Sigmoid colon (tissue), 7 donors: ENCODE measurements at regions of chr16 and their contacts with region 1.

Region 1: DNA sequence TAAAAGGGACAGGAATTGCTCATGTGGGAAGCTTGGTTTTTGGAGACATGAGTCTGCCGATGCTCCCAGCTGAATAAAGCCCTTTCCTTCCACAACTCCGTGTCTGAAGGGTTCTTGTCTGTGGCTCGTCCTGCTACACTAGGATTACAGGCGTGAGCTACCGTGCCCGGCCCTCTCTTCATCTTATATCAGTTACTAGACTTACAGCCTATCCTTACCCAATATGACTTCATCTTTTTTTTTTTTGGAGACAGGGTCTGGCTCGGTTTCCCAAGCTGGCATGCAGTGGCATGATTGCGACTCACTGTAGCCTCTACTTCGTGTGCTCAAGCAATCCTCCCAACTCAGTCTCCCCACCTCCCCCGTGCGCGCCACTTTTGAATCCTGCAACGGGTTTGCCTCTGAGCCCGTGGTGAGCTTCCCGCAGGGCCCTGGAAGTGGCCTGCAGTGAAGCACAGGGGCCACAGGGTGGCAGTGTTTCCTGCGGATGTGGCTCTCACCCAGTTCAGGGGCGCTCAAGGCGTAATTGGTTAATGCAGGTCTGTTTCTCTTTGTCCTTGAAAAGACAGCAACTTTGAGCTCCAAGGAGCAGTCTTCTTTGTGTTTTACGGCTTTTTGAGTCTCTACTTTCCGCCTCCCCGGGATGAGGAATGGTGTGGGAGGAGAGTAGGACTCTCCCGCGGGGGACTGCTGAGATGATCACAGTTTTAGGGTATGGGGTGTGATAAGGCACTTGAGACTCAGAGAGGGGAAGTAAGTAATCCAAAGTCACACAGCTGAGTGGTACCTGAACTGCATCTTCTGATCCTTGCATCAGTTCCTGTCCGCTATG is 22.7 kb upstream of the GPRC5B start:
- DNase-seq: peak; percentile 77
- H3K4me3 ChIP-seq: no peak overlapping the region
- H3K27ac ChIP-seq: no peak overlapping the region
- H3K4me1 ChIP-seq: peaks cover 0 to 5% (median 0%) of the 10 kb centered on the region in 4 donors
- H3K27me3 ChIP-seq: peaks cover 0 to 12% (median 4%) of the 10 kb centered on the region in 3 donors
- CTCF ChIP-seq: peak; percentile 74 to 91 (median 80)
- EP300 ChIP-seq: no peak
- POLR2A ChIP-seq: no peak

Region 2: GRCh38 chr16:19167710-19168370 is 739.5 kb before region 1 on chr16 and contains the start of gene SYT17:
- intact Hi-C with region 1: no loop called
- DNase-seq: no peak
- H3K4me3 ChIP-seq: peak within 1 kb of the TSS; percentile 26 to 53 (median 46)
- H3K27ac ChIP-seq: peak within 1 kb of the TSS in 1 of 4 donors; percentile 65
- H3K4me1 ChIP-seq: peaks cover 0 to 18% (median 17%) of the 10 kb centered on the region in 4 donors
- H3K27me3 ChIP-seq: peaks cover 18 to 48% (median 29%) of the 10 kb centered on the region in 3 donors
- CTCF ChIP-seq: peak in 2 of 4 experiments; percentile 31 to 43
- EP300 ChIP-seq: no peak
- POLR2A ChIP-seq: no peak
- total RNA-seq, gene SYT17: 0.68 to 2.5 (median 1.8) TPM

Region 3: GRCh38 chr16:19636436-19637270 is 270.7 kb before region 1 on chr16:
- intact Hi-C with region 1: no loop called
- DNase-seq: peak; percentile 67
- H3K4me3 ChIP-seq: no peak overlapping the region
- H3K27ac ChIP-seq: peak overlapping the region; percentile 43 to 60 (median 53)
- H3K4me1 ChIP-seq: peaks cover 0 to 28% (median 4%) of the 10 kb centered on the region in 4 donors
- H3K27me3 ChIP-seq: no peaks in the 10 kb centered on the region
- CTCF ChIP-seq: no peak
- EP300 ChIP-seq: peak in 2 of 4 donors; percentile 22 to 64
- POLR2A ChIP-seq: no peak

Region 4: GRCh38 chr16:20300312-20301097 is 393.1 kb after region 1 on chr16:
- intact Hi-C with region 1: loop called (anchors 5 kb)
- DNase-seq: no peak
- H3K4me3 ChIP-seq: no peak overlapping the region
- H3K27ac ChIP-seq: no peak overlapping the region
- H3K4me1 ChIP-seq: no peaks in the 10 kb centered on the region
- H3K27me3 ChIP-seq: peaks cover 0 to 5% (median 0%) of the 10 kb centered on the region in 3 donors
- CTCF ChIP-seq: peak in 2 of 4 experiments; percentile 39 to 52
- EP300 ChIP-seq: no peak
- POLR2A ChIP-seq: no peak

Region 5: DNA sequence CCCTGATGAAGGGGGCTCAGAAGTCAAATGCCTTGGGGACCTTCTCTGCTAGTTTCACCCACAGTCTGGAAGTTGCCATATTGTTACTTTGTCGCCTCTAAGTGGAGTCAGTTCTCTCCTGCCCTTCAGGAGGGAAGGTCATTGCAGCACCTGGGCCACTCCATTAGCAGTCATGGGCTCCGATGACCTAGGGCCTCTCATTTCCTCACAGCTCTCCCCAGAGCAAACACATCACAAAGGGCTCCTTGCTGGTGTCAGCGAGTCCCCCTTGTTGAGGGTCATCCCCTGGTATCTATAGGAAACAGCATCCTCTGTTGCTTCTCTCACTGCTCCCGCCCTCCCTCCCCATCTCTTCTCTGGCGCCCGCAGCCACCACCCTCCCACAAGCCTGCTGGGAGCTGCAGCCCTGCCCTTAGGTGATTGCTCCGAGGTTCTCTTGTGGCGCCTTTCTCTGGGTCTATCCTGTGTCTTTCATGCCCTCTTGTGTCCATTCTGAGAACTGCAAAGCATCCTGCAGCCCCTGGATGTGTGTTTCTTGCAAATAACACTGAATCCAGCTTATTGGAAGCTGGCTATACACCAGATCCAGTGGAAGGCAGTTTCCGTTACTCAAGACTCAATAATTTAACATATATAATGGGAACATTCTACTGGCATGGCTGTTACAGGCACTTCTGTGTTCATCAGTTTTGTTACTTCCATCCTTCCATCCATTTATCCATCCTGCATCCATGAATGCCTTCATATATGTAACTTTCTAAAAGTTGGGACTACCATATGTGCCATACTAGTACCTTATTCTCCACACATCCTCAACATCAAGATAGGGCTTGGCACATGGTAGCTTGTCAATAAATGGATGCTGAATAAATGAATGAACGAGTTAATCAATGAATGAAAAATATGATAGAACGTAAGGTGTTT is 476.0 kb after region 1 on chr16:
- intact Hi-C with region 1: loop called (anchors 1 kb)
- DNase-seq: peak; percentile 74
- H3K4me3 ChIP-seq: no peak overlapping the region
- H3K27ac ChIP-seq: no peak overlapping the region
- H3K4me1 ChIP-seq: peaks cover 0 to 6% (median 0%) of the 10 kb centered on the region in 4 donors
- H3K27me3 ChIP-seq: peaks cover 0 to 12% (median 5%) of the 10 kb centered on the region in 3 donors
- CTCF ChIP-seq: peak; percentile 44 to 86 (median 69)
- EP300 ChIP-seq: no peak
- POLR2A ChIP-seq: no peak